ENCODE measurements at regions of chr2 and their contacts with region 1.

Region 1: DNA sequence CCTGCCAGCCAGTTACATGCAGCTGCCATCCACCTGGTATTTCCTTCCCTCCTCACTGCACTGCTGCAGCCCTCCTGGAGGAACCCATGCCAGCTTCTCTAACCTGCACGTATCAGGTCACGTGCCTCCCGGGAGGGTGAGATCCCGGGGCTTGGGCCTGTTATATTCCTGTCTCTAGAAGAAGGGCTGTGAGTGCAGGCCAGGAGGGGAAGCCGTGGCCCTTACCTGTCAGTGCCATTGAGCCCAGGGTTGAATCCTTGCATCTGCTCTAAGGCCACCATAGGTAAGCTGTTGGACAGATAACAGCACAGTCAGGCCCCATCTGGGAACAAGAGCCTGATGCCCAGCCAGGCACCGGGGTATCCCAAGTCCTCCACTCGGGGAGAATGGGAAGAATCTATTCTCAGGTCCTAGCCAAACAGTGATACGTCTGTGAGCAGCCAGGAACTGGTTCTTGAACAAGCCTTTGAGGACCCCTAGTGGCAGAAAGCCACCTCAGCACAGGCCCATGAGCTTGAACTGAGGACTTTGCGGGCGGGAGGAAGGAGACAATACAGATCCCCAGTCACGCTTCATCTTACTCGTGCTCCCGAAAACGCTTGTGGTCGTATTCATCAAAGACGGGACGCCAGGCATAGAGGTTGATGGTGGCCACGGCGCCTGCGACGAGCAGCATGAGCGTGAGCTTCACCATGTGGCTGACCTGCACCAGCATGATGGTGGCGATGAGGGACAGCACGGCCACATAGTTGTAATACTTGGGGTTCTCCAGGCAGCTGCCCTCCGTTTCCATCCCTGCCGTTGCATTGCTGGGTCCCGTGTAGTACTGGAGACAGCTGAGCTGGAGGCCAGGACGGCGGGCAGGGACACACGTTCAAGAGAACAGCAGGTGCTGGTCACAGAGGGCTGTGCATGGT is 34.4 kb downstream of the CENPO start:
- DNase-seq: peak; percentile 81
- ATAC-seq: peak; percentile 92 to 95

Region 2: GRCh38 chr2:24409700-24410556 is 417.7 kb before region 1 on chr2:
- intact Hi-C with region 1: loop called (anchors 1 to 5 kb)
- DNase-seq: no peak
- ATAC-seq: peak; percentile 79 to 82

Region 3: GRCh38 chr2:24421668-24422067 is 405.9 kb before region 1 on chr2:
- intact Hi-C with region 1: loop called in 1 of 2 experiments (anchors 5 kb)
- DNase-seq: peak; percentile 74
- ATAC-seq: peak; percentile 82 to 89

Region 4: GRCh38 chr2:24721470-24721869 is 106.1 kb before region 1 on chr2:
- intact Hi-C with region 1: no loop called
- DNase-seq: peak; percentile 79
- ATAC-seq: peak; percentile 94 to 98

Region 5: DNA sequence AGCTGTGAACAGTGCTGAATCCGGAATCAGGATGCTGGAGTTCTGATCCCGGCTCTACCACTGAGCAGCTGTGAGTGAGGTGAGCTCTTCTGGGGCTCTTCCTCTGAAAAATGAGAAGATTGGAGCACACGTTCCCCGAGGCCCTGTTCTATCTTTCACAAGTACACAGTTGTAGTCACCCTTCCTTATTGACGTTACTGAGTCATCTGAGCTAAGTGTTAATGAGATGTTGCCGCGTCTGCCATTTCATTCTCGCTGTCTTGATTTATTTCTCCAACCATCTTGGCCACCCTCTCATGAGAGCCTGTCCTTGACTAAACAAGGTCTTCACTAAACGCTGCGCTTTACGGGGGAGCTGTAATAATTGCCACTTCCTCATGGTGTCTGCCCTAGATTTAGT is 182.4 kb after region 1 on chr2:
- intact Hi-C with region 1: no loop called
- DNase-seq: no peak
- ATAC-seq: peak in 1 of 2 donors; percentile 34

Region 6: DNA sequence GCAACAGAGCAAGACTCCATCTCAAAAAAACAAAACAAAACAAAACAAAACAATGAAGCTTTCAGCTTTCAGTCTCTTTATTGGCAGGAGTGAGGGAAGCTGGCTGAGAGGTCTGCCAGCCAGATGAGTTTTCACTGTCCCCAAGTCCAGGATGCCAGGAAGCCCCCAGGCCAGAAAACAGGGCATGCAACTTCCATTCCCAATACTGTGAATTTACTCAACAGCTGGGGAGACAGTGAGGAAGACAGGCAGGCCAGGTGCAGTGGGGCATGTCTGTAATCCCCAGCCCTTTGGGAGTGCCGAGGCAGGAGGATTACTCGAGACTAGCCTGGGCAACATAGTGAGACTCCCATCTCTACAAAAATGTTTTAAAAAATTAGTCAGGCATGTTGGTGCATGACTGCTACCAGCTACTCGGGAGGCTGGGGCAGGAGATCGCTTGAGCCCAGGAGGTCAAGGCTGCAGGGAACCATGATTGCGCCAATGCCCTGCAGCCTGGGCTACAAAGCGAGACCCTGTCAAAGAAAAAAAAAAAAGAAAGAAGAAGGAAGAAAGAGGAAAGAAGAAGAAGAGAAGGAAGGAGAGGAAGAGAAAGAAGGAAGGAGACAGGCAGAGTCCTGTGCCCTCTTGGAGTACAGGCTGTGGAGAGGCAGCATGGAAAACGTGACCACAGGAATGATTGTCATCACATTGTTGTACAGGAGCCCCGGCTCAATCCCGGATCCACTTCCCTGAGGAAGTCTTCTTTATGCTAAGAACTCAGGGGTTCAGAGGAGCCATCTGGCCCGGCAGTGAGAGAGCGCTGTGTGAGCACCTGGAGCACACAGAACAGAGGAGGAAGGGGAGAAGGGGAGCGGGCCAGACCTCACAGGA is 370.0 kb after region 1 on chr2:
- intact Hi-C with region 1: loop called in 1 of 2 experiments (anchors 10 kb)
- DNase-seq: no peak
- ATAC-seq: no peak

Measured in left cardiac atrium (tissue), 4 donors.